ENCODE measurements at regions of chr11 and their contacts with region 1.

Region 1: DNA sequence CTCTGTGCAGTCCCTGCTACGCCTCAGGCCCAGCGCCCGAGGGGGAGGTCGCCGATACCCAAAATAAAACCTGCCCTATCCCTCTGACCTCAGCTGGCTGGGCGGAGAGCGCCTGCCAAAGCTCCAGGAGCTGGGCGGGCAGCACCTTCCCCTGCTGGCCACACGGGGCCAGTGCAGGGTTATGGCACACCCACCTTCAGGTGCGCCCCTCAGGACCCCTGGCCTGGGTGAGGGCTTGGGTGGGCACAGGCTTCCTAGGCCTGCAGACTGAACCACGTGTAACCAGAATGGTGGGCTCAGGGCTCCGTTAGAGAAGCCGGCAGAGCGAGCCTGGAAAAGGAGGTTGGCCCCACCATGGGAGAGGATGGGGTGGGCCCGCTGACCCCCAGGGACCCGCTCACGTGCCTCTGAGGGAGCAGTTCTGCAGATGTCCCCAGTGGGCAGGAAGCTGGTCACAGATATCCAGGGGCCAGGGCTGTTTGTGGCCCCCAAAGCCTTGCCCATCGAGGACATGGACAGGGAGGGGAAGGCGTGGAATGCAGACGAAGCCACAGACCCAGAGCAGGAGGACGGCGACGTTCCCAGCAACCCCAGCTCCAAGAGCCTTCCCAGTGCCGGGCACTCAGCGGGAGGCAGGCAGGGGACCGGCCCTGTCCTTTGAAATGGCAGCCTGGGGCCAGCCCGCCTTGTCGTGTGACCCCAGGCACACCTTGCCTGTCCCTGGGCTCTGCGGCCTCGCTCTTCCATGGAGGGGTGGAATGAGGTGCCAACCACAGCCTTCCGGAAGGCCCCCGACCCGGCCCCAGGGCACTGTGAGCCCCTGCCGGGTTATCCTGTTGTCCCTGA is 1.6 kb upstream of the TNNT3 start:
- DNase-seq: no peak
- ATAC-seq: peak; percentile 32
- H3K4me3 Mint-ChIP-seq: no peak overlapping the region
- H3K27ac Mint-ChIP-seq: no peak overlapping the region
- H3K4me1 Mint-ChIP-seq: peaks cover 19% of the 10 kb centered on the region
- H3K27me3 Mint-ChIP-seq: peaks cover 6% of the 10 kb centered on the region
- CTCF ChIP-seq: peak; percentile 59

Region 2: DNA sequence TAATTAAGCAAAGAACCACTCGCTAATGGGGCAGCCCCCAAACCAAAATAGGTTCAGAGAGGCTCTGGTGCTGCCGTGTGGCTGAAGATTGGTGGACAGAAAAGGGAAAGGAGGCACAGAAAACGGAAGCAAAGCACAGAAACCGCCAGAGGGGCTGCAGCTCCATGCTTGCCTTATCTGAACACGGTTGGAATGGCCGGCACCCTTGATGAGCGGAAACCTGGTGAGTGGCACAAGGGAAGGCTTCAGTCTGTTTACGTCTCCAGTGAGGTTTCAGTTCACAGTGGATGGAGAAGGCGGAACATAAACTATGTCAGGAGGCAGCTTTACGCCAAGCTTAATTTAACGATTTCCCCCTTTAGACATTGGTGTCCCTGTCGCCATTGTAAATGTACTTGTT is 21.0 kb before region 1 on chr11:
- CTCF ChIA-PET with region 1: interaction called, 12 read pairs
- POLR2A ChIA-PET with region 1: interaction called, 62 read pairs
- intact Hi-C with region 1: loop called (anchors 1 kb)
- DNase-seq: no peak
- ATAC-seq: no peak
- H3K4me3 Mint-ChIP-seq: peak overlapping the region; percentile 36
- H3K27ac Mint-ChIP-seq: no peak overlapping the region
- H3K4me1 Mint-ChIP-seq: peaks cover 20% of the 10 kb centered on the region
- H3K27me3 Mint-ChIP-seq: peaks cover 15% of the 10 kb centered on the region
- CTCF ChIP-seq: no peak

Region 3: DNA sequence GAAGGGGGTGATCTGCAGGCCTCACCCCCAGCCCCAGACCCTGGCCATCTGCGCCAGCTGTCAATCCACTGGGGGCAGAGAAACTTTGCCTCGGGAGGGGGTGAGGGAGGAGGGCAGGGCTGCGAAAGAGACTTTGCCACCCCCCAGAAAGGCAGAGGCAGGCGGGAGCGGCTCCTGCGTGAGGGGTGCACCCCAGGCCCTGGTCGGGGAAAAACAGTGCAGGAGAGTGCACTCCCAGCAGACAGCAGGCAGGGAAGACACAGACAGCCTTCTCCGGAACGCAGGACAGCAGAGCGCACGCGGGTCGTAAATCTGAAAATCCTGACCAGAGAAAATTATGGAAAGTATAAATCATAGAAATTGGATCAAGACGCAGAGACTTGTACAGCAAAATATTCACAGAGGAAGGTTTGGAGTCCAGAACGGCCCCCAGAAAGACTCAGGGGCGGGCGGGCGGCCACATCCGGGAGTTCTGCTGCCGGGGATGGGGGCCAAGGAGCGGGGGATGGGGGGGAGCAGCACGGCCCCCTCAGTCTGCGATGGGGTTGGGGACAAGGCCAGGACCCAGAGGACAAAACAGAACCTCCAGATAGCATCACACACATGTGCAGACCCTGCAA is 21.2 kb after region 1 on chr11:
- CTCF ChIA-PET with region 1: no interaction called
- POLR2A ChIA-PET with region 1: no interaction called
- intact Hi-C with region 1: loop called (anchors 2 kb)
- DNase-seq: peak; percentile 49
- ATAC-seq: peak; percentile 76
- H3K4me3 Mint-ChIP-seq: no peak overlapping the region
- H3K27ac Mint-ChIP-seq: no peak overlapping the region
- H3K4me1 Mint-ChIP-seq: peaks cover 12% of the 10 kb centered on the region
- H3K27me3 Mint-ChIP-seq: no peaks in the 10 kb centered on the region
- CTCF ChIP-seq: no peak